ENCODE measurements at regions of chr2 and their contacts with region 1.

Region 1: GRCh38 chr2:191150600-191151330 is at the start of gene STAT4:
- DNase-seq: peak; percentile 92
- ATAC-seq: peak; percentile 84
- H3K4me3 Mint-ChIP-seq: peak within 1 kb of the TSS; percentile 94
- H3K27ac Mint-ChIP-seq: peak within 1 kb of the TSS; percentile 95
- H3K4me1 Mint-ChIP-seq: peaks cover 69% of the 10 kb centered on the region
- H3K27me3 Mint-ChIP-seq: no peaks in the 10 kb centered on the region
- total RNA-seq, gene STAT4: 101 to 109 TPM

Region 2: GRCh38 chr2:191051825-191052778 is 98.7 kb before region 1 on chr2:
- CTCF ChIA-PET with region 1: interaction called, 369 read pairs
- DNase-seq: no peak
- ATAC-seq: peak; percentile 55
- H3K4me3 Mint-ChIP-seq: no peak overlapping the region
- H3K27ac Mint-ChIP-seq: no peak overlapping the region
- H3K4me1 Mint-ChIP-seq: peaks cover 18% of the 10 kb centered on the region
- H3K27me3 Mint-ChIP-seq: no peaks in the 10 kb centered on the region

Region 3: GRCh38 chr2:191066197-191066918 is 84.4 kb before region 1 on chr2:
- CTCF ChIA-PET with region 1: interaction called, 52 read pairs
- DNase-seq: no peak
- ATAC-seq: peak; percentile 45
- H3K4me3 Mint-ChIP-seq: peak overlapping the region; percentile 95
- H3K27ac Mint-ChIP-seq: peak overlapping the region; percentile 90
- H3K4me1 Mint-ChIP-seq: peaks cover 76% of the 10 kb centered on the region
- H3K27me3 Mint-ChIP-seq: no peaks in the 10 kb centered on the region

Region 4: DNA sequence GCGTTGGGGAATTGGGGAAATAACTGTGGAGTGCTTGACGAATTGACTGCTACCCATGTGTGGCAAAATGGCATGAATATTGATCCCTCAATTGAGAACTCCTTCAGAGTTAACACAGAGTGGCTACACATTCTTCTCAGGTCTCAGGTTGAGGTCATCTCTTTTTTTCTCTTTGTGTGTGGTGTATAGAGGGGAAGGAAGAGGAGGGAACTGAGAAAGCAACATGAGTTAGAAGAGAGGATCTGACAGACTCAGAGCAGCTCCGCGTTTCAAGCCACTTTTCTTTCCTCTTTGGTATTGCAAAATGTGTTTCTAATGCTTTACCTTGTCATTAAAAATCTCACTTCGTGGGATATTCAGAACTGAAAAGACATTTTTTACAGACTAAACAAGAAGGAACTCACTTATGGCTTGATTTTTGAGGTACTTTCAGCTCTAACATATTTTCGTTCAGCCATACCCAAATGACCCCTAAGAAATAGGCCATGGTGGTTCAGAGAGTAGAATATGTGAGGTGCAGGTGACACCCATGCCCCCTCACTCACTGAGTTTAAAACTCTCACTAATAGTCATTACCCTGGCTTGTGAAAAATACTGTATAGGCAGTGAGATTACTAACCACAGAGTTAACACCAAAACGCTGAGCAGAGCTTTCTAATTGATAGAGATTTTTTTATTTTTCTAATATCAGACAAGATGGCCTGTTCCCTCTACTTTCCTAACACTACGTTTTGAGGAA is 22.4 kb before region 1 on chr2:
- CTCF ChIA-PET with region 1: interaction called, 14 read pairs
- DNase-seq: peak; percentile 57
- ATAC-seq: peak; percentile 88
- H3K4me3 Mint-ChIP-seq: peak overlapping the region; percentile 67
- H3K27ac Mint-ChIP-seq: peak overlapping the region; percentile 90
- H3K4me1 Mint-ChIP-seq: peaks cover 70% of the 10 kb centered on the region
- H3K27me3 Mint-ChIP-seq: no peaks in the 10 kb centered on the region

Region 5: DNA sequence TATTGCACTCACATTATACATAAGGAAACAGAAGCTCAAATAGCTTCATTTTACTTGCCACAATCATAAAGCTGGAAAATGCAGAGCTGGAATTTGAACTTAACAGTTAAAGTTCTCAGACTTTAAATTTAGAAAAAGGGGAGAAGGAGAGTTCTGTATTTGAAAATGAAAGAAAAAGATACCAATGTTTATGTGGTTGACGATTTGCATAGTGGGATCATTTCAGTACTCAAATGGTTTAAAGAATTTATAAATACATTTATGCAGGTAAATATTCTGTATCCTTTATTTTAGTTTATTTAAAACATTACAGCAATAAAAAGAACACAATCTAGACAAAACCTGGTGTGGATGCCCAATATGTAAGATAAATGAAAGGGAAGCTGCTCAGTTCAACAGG is 25.5 kb after region 1 on chr2:
- CTCF ChIA-PET with region 1: interaction called, 11 read pairs
- DNase-seq: no peak
- ATAC-seq: no peak
- H3K4me3 Mint-ChIP-seq: peak overlapping the region; percentile 35
- H3K27ac Mint-ChIP-seq: peak overlapping the region; percentile 70
- H3K4me1 Mint-ChIP-seq: peaks cover 37% of the 10 kb centered on the region
- H3K27me3 Mint-ChIP-seq: no peaks in the 10 kb centered on the region